ENCODE measurements at regions of chrX and their contacts with region 1.

Region 1: DNA sequence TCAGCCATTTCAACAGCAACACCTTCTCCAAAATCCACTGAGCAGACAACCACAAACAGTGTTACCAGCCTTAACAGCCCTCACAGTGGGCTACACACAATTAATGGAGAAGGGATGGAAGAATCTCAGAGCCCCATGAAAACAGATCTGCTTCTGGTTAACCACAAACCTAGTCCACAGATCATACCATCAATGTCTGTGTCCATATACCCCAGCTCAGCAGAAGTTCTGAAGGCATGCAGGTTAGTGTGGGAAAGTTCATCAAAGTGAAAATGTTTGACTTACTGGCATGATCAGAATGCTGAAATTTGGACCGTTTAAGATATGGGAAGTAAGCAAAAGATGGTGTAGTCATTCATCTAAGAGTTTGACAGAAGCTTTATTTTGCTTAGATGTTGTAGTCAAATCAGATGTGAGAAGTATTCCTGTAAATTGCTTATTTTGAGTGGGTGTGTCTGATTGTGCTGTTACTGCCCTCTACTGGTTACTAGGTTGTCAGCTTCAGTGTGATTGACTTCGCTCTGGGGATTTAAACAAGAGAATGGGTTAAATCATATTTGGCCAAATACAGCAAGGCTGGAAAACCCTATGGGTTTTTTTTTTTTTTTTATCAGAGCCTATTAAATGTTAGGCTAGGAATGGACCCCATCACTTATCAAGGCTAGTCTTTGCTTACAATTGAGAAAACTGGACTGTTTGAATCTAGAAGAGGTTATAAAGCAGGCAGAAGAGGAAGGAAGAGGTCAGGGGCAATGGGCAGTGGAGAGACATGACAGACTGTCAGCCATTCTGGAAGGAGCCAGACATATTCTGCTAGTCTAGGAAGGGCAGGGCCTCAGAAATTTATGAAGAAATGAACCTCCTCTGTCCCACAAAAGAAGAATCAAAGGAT is 130.3 kb downstream of the DIPK2B start:
- DNase-seq: peak in 5 of 14 experiments; percentile 4 to 67 (median 60)
- ATAC-seq: peak; percentile 43
- H3K4me3 ChIP-seq: no peak overlapping the region
- H3K4me3 Mint-ChIP-seq: peak overlapping the region; percentile 13
- H3K27ac ChIP-seq: no peak overlapping the region
- H3K27ac Mint-ChIP-seq: peak overlapping the region; percentile 31
- H3K4me1 ChIP-seq: peaks cover 16% of the 10 kb centered on the region
- H3K4me1 Mint-ChIP-seq: peaks cover 74% of the 10 kb centered on the region
- H3K27me3 ChIP-seq: no peaks in the 10 kb centered on the region
- H3K27me3 Mint-ChIP-seq: no peaks in the 10 kb centered on the region
- CTCF ChIP-seq: peak; percentile 64

Region 2: GRCh38 chrX:43836435-43837184 is 1233.8 kb before region 1 on chrX:
- CTCF ChIA-PET with region 1: no interaction called
- POLR2A ChIA-PET with region 1: no interaction called
- intact Hi-C with region 1: loop called in 1 of 2 experiments (anchors 5 kb)
- DNase-seq: peak in 3 of 14 experiments; percentile 25 to 32 (median 32)
- ATAC-seq: no peak
- H3K4me3 ChIP-seq: no peak overlapping the region
- H3K4me3 Mint-ChIP-seq: no peak overlapping the region
- H3K27ac ChIP-seq: no peak overlapping the region
- H3K27ac Mint-ChIP-seq: no peak overlapping the region
- H3K4me1 ChIP-seq: no peaks in the 10 kb centered on the region
- H3K4me1 Mint-ChIP-seq: no peaks in the 10 kb centered on the region
- H3K27me3 ChIP-seq: peaks cover 0 to 3% of the 10 kb centered on the region in 2 experiments
- H3K27me3 Mint-ChIP-seq: no peaks in the 10 kb centered on the region
- CTCF ChIP-seq: peak; percentile 63

Region 3: GRCh38 chrX:44183329-44183728 is 887.0 kb before region 1 on chrX:
- CTCF ChIA-PET with region 1: no interaction called
- POLR2A ChIA-PET with region 1: no interaction called
- intact Hi-C with region 1: loop called in 1 of 2 experiments (anchors 5 kb)
- DNase-seq: peak in 2 of 14 experiments; percentile 1 to 2
- ATAC-seq: no peak
- H3K4me3 ChIP-seq: no peak overlapping the region
- H3K4me3 Mint-ChIP-seq: no peak overlapping the region
- H3K27ac ChIP-seq: no peak overlapping the region
- H3K27ac Mint-ChIP-seq: no peak overlapping the region
- H3K4me1 ChIP-seq: no peaks in the 10 kb centered on the region
- H3K4me1 Mint-ChIP-seq: no peaks in the 10 kb centered on the region
- H3K27me3 ChIP-seq: no peaks in the 10 kb centered on the region
- H3K27me3 Mint-ChIP-seq: no peaks in the 10 kb centered on the region
- CTCF ChIP-seq: no peak

Region 4: GRCh38 chrX:44675362-44676024 is 394.9 kb before region 1 on chrX:
- CTCF ChIA-PET with region 1: no interaction called
- POLR2A ChIA-PET with region 1: no interaction called
- intact Hi-C with region 1: no loop called
- DNase-seq: no peak
- ATAC-seq: no peak
- H3K4me3 ChIP-seq: no peak overlapping the region
- H3K4me3 Mint-ChIP-seq: no peak overlapping the region
- H3K27ac ChIP-seq: no peak overlapping the region
- H3K27ac Mint-ChIP-seq: no peak overlapping the region
- H3K4me1 ChIP-seq: no peaks in the 10 kb centered on the region
- H3K4me1 Mint-ChIP-seq: no peaks in the 10 kb centered on the region
- H3K27me3 ChIP-seq: no peaks in the 10 kb centered on the region
- H3K27me3 Mint-ChIP-seq: no peaks in the 10 kb centered on the region
- CTCF ChIP-seq: no peak

Region 5: GRCh38 chrX:44872817-44873414 is 197.4 kb before region 1 on chrX and contains the start of gene KDM6A:
- CTCF ChIA-PET with region 1: interaction called, 5 read pairs
- POLR2A ChIA-PET with region 1: interaction called, 3 read pairs
- intact Hi-C with region 1: loop called (anchors 5 to 10 kb)
- DNase-seq: peak; percentile 91 to 100 (median 96)
- ATAC-seq: peak; percentile 87
- H3K4me3 ChIP-seq: peak within 1 kb of the TSS; percentile 82
- H3K4me3 Mint-ChIP-seq: peak within 1 kb of the TSS; percentile 99
- H3K27ac ChIP-seq: peak within 1 kb of the TSS; percentile 93 to 99
- H3K27ac Mint-ChIP-seq: peak within 1 kb of the TSS; percentile 95
- H3K4me1 ChIP-seq: peaks cover 6% of the 10 kb centered on the region
- H3K4me1 Mint-ChIP-seq: peaks cover 35% of the 10 kb centered on the region
- H3K27me3 ChIP-seq: no peaks in the 10 kb centered on the region
- H3K27me3 Mint-ChIP-seq: no peaks in the 10 kb centered on the region
- CTCF ChIP-seq: no peak
- total RNA-seq, gene KDM6A: 59.6 to 63.9 TPM

Region 6: GRCh38 chrX:44953734-44954502 is 116.4 kb before region 1 on chrX:
- CTCF ChIA-PET with region 1: no interaction called
- POLR2A ChIA-PET with region 1: no interaction called
- intact Hi-C with region 1: loop called in 1 of 2 experiments (anchors 10 kb)
- DNase-seq: no peak
- ATAC-seq: no peak
- H3K4me3 ChIP-seq: no peak overlapping the region
- H3K4me3 Mint-ChIP-seq: no peak overlapping the region
- H3K27ac ChIP-seq: no peak overlapping the region
- H3K27ac Mint-ChIP-seq: no peak overlapping the region
- H3K4me1 ChIP-seq: peaks cover 17% of the 10 kb centered on the region
- H3K4me1 Mint-ChIP-seq: peaks cover 61% of the 10 kb centered on the region
- H3K27me3 ChIP-seq: no peaks in the 10 kb centered on the region
- H3K27me3 Mint-ChIP-seq: no peaks in the 10 kb centered on the region
- CTCF ChIP-seq: no peak

Region 7: DNA sequence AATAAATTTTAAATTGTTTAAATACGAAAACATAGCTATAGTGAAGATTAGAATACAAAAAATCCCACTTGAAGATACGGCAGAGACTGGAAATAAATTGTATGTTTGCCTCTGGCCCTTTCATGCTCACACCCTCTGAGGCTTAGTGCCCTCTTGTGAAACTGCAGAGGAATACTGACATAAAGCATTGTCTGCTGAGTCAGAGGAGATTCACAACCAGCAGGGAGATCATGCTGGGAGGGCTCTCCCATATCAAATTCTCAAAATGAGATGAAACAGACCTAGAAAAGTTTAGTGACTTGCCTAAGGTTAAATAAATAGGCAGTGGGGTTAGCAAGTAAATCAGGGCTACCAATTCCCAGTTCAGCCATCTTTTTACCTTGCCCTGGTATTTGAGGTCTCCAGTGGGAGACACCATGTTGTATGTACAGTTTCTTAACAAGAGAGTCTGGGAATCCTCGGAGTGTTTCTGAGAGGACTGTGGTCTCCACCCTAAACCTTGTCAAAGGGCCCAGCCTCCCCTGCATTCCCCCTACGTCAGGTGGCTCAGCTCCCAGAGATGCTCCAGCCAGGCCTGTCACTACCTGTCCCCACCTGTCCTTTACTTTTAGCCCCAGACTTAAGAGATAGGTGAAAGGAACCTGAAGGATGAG is 711.7 kb after region 1 on chrX:
- CTCF ChIA-PET with region 1: no interaction called
- POLR2A ChIA-PET with region 1: no interaction called
- intact Hi-C with region 1: no loop called
- DNase-seq: peak in 2 of 14 experiments; percentile 31 to 47
- ATAC-seq: peak; percentile 39
- H3K4me3 ChIP-seq: no peak overlapping the region
- H3K4me3 Mint-ChIP-seq: no peak overlapping the region
- H3K27ac ChIP-seq: no peak overlapping the region
- H3K27ac Mint-ChIP-seq: no peak overlapping the region
- H3K4me1 ChIP-seq: no peaks in the 10 kb centered on the region
- H3K4me1 Mint-ChIP-seq: peaks cover 26% of the 10 kb centered on the region
- H3K27me3 ChIP-seq: no peaks in the 10 kb centered on the region
- H3K27me3 Mint-ChIP-seq: no peaks in the 10 kb centered on the region
- CTCF ChIP-seq: no peak